Left ventricle myocardium superior (tissue), 1 donor: ENCODE measurements at regions of chr18 and their contacts with region 1.

Region 1: GRCh38 chr18:13471971-13472628 is 253.5 kb downstream of the LDLRAD4 start:
- DNase-seq: peak; percentile 59
- ATAC-seq: peak; percentile 26

Region 2: GRCh38 chr18:13416208-13416607 is 55.9 kb before region 1 on chr18:
- intact Hi-C with region 1: loop called (anchors 10 kb)
- DNase-seq: no peak
- ATAC-seq: peak; percentile 40